Naive thymus-derived CD4-positive, alpha-beta T cell (primary cell): ENCODE measurements at regions of chr9 and their contacts with region 1.

Region 1: DNA sequence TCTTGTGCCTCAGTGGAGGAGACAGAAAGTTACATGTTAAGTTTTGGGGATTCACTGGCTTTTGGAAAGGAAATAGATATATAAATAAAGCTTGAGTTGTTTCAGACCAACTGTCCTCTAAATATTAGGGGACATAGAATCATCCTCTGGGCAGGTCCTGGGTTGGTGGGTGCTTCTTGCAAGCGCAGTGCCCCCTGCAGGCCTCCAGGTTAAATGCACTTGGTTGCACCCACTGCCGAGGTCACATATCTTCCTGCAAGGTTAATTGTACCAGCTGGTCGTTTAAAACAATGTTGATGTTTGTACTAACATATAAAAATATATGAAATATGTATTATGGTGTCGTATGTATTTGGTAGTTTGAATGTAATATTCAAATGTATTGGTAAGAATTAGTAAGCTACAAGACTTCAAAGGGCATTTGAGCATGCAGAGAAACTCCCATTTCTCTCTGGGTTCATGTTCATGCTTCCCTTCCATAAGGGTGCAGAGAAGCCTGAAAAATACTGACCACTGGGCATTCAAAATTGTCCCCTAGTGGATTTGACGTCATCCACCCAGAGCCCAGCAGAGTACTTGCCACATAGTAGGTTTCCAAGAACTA is 87.0 kb downstream of the ZNF618 start:
- DNase-seq: peak in 1 of 9 donors; percentile 33
- ATAC-seq: peak; percentile 55
- H3K4me3 ChIP-seq: no peak overlapping the region
- H3K4me3 Mint-ChIP-seq: no peak overlapping the region
- H3K27ac ChIP-seq: no peak overlapping the region
- H3K27ac Mint-ChIP-seq: no peak overlapping the region
- H3K4me1 ChIP-seq: no peaks in the 10 kb centered on the region
- H3K4me1 Mint-ChIP-seq: no peaks in the 10 kb centered on the region
- H3K27me3 ChIP-seq: no peaks in the 10 kb centered on the region
- H3K27me3 Mint-ChIP-seq: no peaks in the 10 kb centered on the region

Region 2: DNA sequence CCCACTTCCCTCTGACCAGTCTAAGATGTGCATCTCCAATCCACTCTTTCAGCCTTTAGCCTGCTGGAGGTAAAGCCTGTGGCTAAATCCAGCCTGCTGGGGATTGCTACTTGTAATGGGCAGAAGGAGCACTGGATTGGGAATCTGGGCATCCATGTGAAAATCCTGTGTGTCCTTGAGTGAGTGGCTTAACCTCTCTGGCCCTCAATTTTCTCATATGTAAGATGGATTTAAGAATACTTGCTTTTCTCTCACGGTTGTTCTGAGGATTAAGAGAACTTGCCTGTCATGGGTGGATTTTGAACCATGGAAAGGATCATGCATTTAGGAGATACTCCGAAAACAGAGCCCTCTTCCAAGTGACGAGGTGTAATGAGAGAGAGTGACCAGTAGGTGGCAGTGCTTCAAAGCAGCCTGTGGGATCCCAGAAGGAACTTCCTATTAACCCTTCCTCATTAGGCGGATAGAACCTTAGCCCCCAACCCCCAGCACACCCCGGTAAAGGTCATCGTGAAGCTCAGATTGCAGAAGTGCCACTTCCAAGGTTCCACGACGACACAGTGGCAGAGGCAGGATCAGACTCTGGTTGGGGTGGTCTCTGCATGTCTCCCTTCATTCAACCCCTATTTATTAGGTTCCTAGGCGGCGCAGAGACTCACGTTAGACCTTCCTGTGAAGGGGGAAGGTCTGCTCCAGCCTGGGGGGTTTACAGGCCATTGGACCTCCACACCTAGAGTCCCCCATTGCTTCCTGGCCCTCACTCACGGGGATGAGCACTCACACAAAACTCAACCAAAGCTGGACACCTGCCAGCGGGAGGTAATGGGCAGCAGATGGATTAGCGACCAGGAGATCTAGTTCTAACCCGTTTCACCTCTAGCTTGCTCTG is 155.7 kb before region 1 on chr9:
- CTCF ChIA-PET with region 1: no interaction called
- POLR2A ChIA-PET with region 1: no interaction called
- intact Hi-C with region 1: loop called in 1 of 2 experiments (anchors 1 kb)
- DNase-seq: peak in 6 of 9 donors; percentile 4 to 32 (median 19)
- ATAC-seq: peak; percentile 73
- H3K4me3 ChIP-seq: no peak overlapping the region
- H3K4me3 Mint-ChIP-seq: no peak overlapping the region
- H3K27ac ChIP-seq: no peak overlapping the region
- H3K27ac Mint-ChIP-seq: no peak overlapping the region
- H3K4me1 ChIP-seq: no peaks in the 10 kb centered on the region
- H3K4me1 Mint-ChIP-seq: peaks cover 0 to 4% (median 0%) of the 10 kb centered on the region in 7 donors
- H3K27me3 ChIP-seq: peaks cover 0 to 2% of the 10 kb centered on the region in 2 donors
- H3K27me3 Mint-ChIP-seq: peaks cover 7 to 32% (median 12%) of the 10 kb centered on the region in 5 donors

Region 3: DNA sequence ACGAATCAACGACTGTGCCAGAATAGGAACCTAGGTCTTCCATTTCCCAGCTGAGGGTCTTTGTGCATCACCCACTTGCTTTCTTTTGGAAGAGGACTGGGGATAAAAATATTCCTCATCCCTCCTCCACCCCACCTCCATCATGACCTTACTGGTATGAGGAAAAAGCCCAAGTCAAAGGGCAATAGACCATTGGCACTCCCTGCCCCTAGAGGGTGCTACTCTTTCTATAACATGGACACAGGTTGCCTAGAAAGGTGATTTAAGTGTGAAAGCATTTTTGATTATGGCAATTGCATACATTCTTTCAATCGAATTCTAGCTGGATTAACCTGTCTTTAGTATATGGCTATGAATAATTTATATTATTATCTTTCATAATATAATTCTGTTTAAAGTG is 109.8 kb before region 1 on chr9:
- CTCF ChIA-PET with region 1: no interaction called
- POLR2A ChIA-PET with region 1: no interaction called
- intact Hi-C with region 1: loop called in 1 of 2 experiments (anchors 1 kb)
- DNase-seq: no peak
- ATAC-seq: no peak
- H3K4me3 ChIP-seq: no peak overlapping the region
- H3K4me3 Mint-ChIP-seq: no peak overlapping the region
- H3K27ac ChIP-seq: no peak overlapping the region
- H3K27ac Mint-ChIP-seq: no peak overlapping the region
- H3K4me1 ChIP-seq: no peaks in the 10 kb centered on the region
- H3K4me1 Mint-ChIP-seq: no peaks in the 10 kb centered on the region
- H3K27me3 ChIP-seq: no peaks in the 10 kb centered on the region
- H3K27me3 Mint-ChIP-seq: peaks cover 0 to 38% (median 22%) of the 10 kb centered on the region in 5 donors

Region 4: DNA sequence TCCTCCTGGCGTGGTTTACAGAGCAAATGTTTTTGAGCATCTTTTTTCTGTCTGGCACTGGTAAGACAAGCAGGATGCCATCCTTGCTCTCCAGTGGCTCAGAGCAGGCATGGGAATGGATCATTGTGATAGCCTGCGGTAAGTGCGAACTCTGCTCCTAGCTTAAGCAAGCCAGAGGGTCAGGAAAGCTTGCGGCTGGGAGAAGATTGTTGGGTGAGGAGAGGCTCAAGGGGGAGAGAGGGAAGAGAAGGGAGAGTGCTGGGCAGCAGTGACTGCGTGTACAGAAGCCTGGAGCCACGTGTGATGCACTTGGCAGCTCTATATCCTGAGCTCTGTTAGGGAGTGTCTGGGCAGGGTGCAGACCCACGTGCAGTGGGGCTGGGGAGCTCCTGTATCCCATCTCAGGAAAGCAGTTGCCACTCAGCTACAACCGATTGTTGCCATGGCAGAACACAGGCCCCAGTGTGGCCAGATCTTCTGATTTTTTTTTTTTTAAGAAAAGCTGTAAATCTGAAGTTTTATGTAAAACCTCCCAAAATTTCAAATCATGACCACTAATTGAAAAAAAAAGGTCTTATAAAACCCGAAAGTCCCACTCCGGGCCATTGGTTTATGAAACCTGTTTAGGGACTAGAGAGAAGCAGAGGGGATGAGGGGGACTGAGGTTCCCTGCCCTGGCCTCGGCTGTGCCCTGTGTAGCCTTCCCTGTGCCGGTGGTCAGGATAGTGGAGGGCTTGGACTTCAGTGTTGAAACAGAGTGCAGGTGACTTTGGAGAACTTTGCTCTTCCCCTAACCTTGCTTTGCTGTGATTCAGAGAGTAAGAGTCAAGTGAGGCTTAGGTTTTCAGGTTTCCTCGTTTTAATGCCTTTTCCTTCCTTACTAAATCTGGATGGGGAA is 19.8 kb before region 1 on chr9:
- CTCF ChIA-PET with region 1: no interaction called
- POLR2A ChIA-PET with region 1: no interaction called
- intact Hi-C with region 1: no loop called
- DNase-seq: no peak
- ATAC-seq: no peak
- H3K4me3 ChIP-seq: no peak overlapping the region
- H3K4me3 Mint-ChIP-seq: no peak overlapping the region
- H3K27ac ChIP-seq: no peak overlapping the region
- H3K27ac Mint-ChIP-seq: no peak overlapping the region
- H3K4me1 ChIP-seq: no peaks in the 10 kb centered on the region
- H3K4me1 Mint-ChIP-seq: no peaks in the 10 kb centered on the region
- H3K27me3 ChIP-seq: no peaks in the 10 kb centered on the region
- H3K27me3 Mint-ChIP-seq: peaks cover 0 to 17% (median 6%) of the 10 kb centered on the region in 5 donors

Region 5: DNA sequence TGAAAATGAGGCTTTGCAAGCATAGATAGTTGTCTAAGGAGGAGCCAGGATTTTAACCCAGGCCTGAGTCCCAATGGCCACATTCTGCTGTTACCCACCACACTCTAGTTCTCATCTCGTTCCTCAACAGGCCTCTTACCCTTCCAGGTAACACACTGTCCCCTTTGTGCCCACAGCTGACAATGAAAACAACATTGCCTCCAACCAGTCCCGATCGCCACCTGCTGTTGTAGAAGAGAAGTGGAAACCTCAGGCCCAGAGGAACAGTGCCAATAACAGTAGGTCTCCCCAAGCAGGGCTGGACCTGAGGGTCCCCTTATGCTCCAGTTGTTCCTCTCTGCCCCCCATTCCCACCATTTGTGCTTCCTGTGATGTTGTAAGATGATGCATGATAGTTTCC is 84.6 kb after region 1 on chr9:
- CTCF ChIA-PET with region 1: no interaction called
- POLR2A ChIA-PET with region 1: no interaction called
- intact Hi-C with region 1: no loop called
- DNase-seq: peak in 1 of 9 donors; percentile 9
- ATAC-seq: no peak
- H3K4me3 ChIP-seq: no peak overlapping the region
- H3K4me3 Mint-ChIP-seq: no peak overlapping the region
- H3K27ac ChIP-seq: no peak overlapping the region
- H3K27ac Mint-ChIP-seq: no peak overlapping the region
- H3K4me1 ChIP-seq: no peaks in the 10 kb centered on the region
- H3K4me1 Mint-ChIP-seq: no peaks in the 10 kb centered on the region
- H3K27me3 ChIP-seq: no peaks in the 10 kb centered on the region
- H3K27me3 Mint-ChIP-seq: peaks cover 0 to 11% (median 0%) of the 10 kb centered on the region in 5 donors